ENCODE measurements at regions of chr12 and their contacts with region 1.

Region 1: DNA sequence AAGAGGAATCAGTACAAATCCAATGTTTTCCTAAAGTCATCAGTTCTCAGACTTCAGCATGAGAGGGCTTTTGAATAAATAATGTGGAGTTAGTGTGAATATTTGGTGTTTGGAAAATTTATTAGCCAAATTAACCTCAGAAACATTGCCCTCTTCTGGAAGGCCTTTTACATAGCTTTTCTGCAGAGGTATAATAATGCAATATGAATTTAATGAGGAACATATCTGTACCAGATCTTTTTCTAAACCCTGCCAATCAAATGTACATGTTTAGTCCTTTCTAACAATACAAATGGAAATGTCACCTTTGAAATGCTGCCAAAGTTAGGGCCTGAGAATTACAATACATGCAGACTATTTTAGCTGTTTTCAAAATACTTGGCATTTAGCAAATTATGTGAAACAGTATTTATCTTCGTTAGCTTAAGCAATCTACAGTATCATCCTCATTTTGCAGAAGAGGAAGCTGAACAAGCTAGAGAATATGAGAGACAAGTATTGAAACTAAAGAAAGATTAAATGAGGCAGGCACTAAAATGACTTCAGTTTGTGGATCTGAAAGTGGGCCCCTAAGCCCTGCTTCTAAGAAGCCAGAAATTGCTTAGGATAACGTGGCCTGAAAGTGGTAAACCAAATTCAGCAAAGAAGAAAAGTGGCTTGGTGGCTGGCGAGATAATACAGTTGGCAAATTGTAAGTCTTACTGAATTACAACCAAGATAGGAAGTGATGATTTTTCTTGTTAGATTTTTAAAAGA is 60.4 kb upstream of the MANSC4 start:
- DNase-seq: no peak
- H3K4me3 ChIP-seq: no peak overlapping the region
- H3K4me3 Mint-ChIP-seq: no peak overlapping the region
- H3K27ac Mint-ChIP-seq: no peak overlapping the region
- H3K4me1 ChIP-seq: peaks cover 35% of the 10 kb centered on the region
- H3K4me1 Mint-ChIP-seq: peaks cover 35% of the 10 kb centered on the region
- H3K27me3 ChIP-seq: no peaks in the 10 kb centered on the region
- H3K27me3 Mint-ChIP-seq: no peaks in the 10 kb centered on the region
- CTCF ChIP-seq: no peak

Region 2: GRCh38 chr12:27673101-27673718 is 167.2 kb before region 1 on chr12:
- CTCF ChIA-PET with region 1: no interaction called
- POLR2A ChIA-PET with region 1: no interaction called
- intact Hi-C with region 1: no loop called
- DNase-seq: no peak
- H3K4me3 ChIP-seq: no peak overlapping the region
- H3K4me3 Mint-ChIP-seq: no peak overlapping the region
- H3K27ac Mint-ChIP-seq: no peak overlapping the region
- H3K4me1 ChIP-seq: no peaks in the 10 kb centered on the region
- H3K4me1 Mint-ChIP-seq: no peaks in the 10 kb centered on the region
- H3K27me3 ChIP-seq: no peaks in the 10 kb centered on the region
- H3K27me3 Mint-ChIP-seq: no peaks in the 10 kb centered on the region
- CTCF ChIP-seq: no peak

Region 3: DNA sequence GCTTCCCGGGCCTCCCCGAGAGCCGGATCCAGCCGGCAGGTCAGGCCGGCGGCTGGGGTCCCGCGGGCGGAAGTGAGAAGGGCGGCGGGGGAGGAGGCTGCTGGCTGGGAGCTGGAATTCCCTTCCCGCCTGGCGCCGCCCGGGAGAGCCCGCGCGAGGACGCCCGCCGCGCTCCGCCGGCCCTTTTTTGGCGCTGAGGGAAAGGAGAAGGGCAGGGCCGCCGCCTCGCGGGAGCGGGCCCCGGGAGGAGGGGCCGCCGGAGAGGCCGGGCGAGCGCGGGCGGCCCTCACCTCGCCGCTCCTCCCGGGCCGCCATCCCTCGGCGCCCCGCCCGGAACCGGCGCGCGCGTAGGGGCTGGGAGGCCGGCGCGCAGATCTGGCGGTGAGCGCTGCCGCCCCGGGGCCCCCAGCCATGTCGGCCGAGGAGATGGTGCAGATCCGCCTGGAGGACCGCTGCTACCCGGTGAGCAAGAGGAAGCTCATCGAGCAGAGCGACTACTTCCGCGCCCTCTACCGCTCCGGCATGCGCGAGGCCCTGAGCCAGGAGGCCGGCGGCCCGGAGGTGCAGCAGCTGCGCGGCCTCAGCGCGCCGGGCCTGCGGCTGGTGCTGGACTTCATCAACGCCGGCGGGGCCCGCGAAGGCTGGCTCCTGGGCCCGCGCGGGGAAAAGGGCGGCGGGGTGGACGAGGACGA is 60.4 kb before region 1 on chr12 and contains the starts of genes KLHL42 and MANSC4:
- CTCF ChIA-PET with region 1: no interaction called
- POLR2A ChIA-PET with region 1: interaction called, 3 read pairs
- intact Hi-C with region 1: loop called (anchors 2 kb)
- DNase-seq: peak; percentile 78 to 87
- H3K4me3 ChIP-seq: peak within 1 kb of the TSS; percentile 95
- H3K4me3 Mint-ChIP-seq: peak within 1 kb of the TSS; percentile 83
- H3K27ac Mint-ChIP-seq: peak within 1 kb of the TSS; percentile 86
- H3K4me1 ChIP-seq: 0 out of 2 replicates have a peak, but pooled peaks cover 3% of the 10 kb centered on the region
- H3K4me1 Mint-ChIP-seq: peaks cover 26% of the 10 kb centered on the region
- H3K27me3 ChIP-seq: no peaks in the 10 kb centered on the region
- H3K27me3 Mint-ChIP-seq: no peaks in the 10 kb centered on the region
- CTCF ChIP-seq: no peak
- total RNA-seq, gene KLHL42: 36.5 and 38.1 TPM in 2 replicates
- total RNA-seq, gene MANSC4: not detected in 2 replicates

Region 4: DNA sequence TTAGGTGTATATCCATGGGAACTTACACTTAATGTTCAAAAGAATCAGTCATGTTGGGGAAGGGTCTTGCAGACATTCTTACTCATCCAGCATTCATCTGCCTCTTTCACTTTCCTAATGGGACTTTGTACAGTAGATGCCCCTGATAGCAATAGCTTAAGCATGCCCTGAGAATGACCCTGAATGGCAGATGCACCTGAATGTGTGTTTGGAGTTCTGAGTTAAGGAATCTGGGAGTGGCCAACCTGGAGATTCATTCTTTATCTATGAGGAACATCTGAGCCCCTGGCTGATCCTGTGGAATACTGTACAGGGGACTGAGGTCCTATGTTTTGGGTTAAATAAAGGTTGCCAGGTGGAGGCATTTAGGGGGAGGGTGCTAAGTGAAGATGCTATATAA is 10.9 kb after region 1 on chr12:
- CTCF ChIA-PET with region 1: no interaction called
- POLR2A ChIA-PET with region 1: no interaction called
- intact Hi-C with region 1: loop called (anchors 1 kb)
- DNase-seq: peak; percentile 67 to 76
- H3K4me3 ChIP-seq: no peak overlapping the region
- H3K4me3 Mint-ChIP-seq: no peak overlapping the region
- H3K27ac Mint-ChIP-seq: no peak overlapping the region
- H3K4me1 ChIP-seq: peaks cover 23% of the 10 kb centered on the region
- H3K4me1 Mint-ChIP-seq: peaks cover 21% of the 10 kb centered on the region
- H3K27me3 ChIP-seq: no peaks in the 10 kb centered on the region
- H3K27me3 Mint-ChIP-seq: no peaks in the 10 kb centered on the region
- CTCF ChIP-seq: no peak

Region 5: DNA sequence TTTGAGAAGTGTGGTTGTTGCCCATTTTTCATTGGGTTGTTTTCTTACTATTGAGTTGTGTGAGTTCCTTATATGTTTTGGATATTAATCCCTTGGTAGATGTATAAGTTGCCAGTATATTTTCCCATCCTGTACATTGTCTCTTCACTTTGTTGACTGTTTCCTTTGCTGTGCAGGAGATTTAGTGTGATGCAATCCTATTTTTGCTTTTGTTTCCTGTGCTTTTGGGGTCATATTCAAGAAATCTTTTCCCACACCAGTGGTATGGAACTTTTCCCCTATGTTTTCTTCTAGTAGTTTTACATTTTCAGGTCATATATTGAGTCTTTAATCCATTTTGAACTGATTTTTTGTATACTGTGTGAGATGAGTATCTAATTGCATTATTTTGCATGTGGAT is 39.3 kb after region 1 on chr12:
- CTCF ChIA-PET with region 1: no interaction called
- POLR2A ChIA-PET with region 1: no interaction called
- intact Hi-C with region 1: no loop called
- DNase-seq: no peak
- H3K4me3 ChIP-seq: no peak overlapping the region
- H3K4me3 Mint-ChIP-seq: no peak overlapping the region
- H3K27ac Mint-ChIP-seq: no peak overlapping the region
- H3K4me1 ChIP-seq: no peaks in the 10 kb centered on the region
- H3K4me1 Mint-ChIP-seq: no peaks in the 10 kb centered on the region
- H3K27me3 ChIP-seq: no peaks in the 10 kb centered on the region
- H3K27me3 Mint-ChIP-seq: no peaks in the 10 kb centered on the region
- CTCF ChIP-seq: no peak

Region 6: DNA sequence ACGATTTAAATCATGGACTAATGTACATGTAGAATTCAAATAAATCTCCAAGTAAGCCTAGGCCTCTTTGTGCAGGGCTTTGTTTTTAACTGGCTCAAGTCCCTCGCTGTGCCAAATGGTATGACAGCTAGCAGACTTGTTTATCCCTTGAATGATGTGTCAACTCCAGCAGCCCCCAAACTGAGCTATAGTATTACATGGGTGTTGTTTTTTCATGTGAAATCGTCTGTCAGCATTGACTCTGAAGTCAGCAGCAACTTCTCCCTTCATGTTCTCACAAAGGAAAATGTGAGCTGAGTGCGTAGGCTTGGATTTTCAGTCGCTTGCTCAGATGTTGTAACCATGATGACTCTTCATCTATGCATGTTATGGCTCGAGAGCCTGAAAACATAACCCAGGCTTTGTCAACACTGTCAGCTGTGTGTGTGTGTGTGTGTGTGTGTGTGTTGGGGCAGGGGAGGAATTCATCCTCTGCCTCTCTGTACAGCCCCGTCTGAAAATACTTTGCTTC is 58.8 kb after region 1 on chr12:
- CTCF ChIA-PET with region 1: no interaction called
- POLR2A ChIA-PET with region 1: no interaction called
- intact Hi-C with region 1: loop called (anchors 2 kb)
- DNase-seq: peak; percentile 56 to 58
- H3K4me3 ChIP-seq: no peak overlapping the region
- H3K4me3 Mint-ChIP-seq: no peak overlapping the region
- H3K27ac Mint-ChIP-seq: peak overlapping the region; percentile 24
- H3K4me1 ChIP-seq: peaks cover 32% of the 10 kb centered on the region
- H3K4me1 Mint-ChIP-seq: peaks cover 22% of the 10 kb centered on the region
- H3K27me3 ChIP-seq: 0 out of 2 replicates have a peak, but pooled peaks cover 2% of the 10 kb centered on the region
- H3K27me3 Mint-ChIP-seq: no peaks in the 10 kb centered on the region
- CTCF ChIP-seq: no peak

Region 7: GRCh38 chr12:28390761-28391385 is 550.5 kb after region 1 on chr12:
- CTCF ChIA-PET with region 1: no interaction called
- POLR2A ChIA-PET with region 1: no interaction called
- intact Hi-C with region 1: no loop called
- DNase-seq: no peak
- H3K4me3 ChIP-seq: no peak overlapping the region
- H3K4me3 Mint-ChIP-seq: no peak overlapping the region
- H3K27ac Mint-ChIP-seq: no peak overlapping the region
- H3K4me1 ChIP-seq: no peaks in the 10 kb centered on the region
- H3K4me1 Mint-ChIP-seq: no peaks in the 10 kb centered on the region
- H3K27me3 ChIP-seq: no peaks in the 10 kb centered on the region
- H3K27me3 Mint-ChIP-seq: no peaks in the 10 kb centered on the region
- CTCF ChIP-seq: no peak

Measured in Caco-2 (cell line).